OCI-LY7 (cell line): ENCODE measurements at regions of chr10 and their contacts with region 1.

Region 1: GRCh38 chr10:16777473-16778370 is 39.5 kb downstream of the RSU1 start:
- DNase-seq: peak; percentile 71
- H3K4me3 ChIP-seq: no peak overlapping the region
- H3K27ac ChIP-seq: no peak overlapping the region
- H3K4me1 ChIP-seq: peaks cover 7% of the 10 kb centered on the region
- CTCF ChIP-seq: peak; percentile 94

Region 2: DNA sequence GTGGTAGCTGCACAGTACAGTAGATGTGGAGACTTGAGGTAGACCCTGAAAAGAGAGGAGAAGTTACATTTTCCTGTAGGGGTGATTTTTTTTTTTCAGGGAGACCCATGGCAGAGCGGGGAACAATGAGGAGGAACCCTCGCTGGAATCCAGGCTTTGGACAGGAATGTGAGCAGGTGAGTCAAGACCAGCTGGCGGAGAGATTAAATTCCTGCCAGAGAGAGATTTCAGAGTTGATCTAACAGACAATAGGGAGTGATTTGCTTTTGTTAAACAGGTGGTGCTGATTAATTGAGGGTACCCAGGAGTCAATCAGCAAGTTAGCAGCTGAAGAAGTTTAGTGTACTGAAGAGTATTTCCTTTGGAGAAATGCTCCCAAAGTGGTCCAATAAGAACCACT is 875.8 kb before region 1 on chr10:
- CTCF ChIA-PET with region 1: no interaction called
- POLR2A ChIA-PET with region 1: no interaction called
- intact Hi-C with region 1: loop called (anchors 5 kb)
- DNase-seq: no peak
- H3K4me3 ChIP-seq: no peak overlapping the region
- H3K27ac ChIP-seq: no peak overlapping the region
- H3K4me1 ChIP-seq: no peaks in the 10 kb centered on the region
- CTCF ChIP-seq: no peak

Region 3: GRCh38 chr10:16116404-16117304 is 661.1 kb before region 1 on chr10:
- CTCF ChIA-PET with region 1: no interaction called
- POLR2A ChIA-PET with region 1: no interaction called
- intact Hi-C with region 1: loop called (anchors 5 kb)
- DNase-seq: peak; percentile 20
- H3K4me3 ChIP-seq: no peak overlapping the region
- H3K27ac ChIP-seq: no peak overlapping the region
- H3K4me1 ChIP-seq: no peaks in the 10 kb centered on the region
- CTCF ChIP-seq: peak; percentile 75

Region 4: DNA sequence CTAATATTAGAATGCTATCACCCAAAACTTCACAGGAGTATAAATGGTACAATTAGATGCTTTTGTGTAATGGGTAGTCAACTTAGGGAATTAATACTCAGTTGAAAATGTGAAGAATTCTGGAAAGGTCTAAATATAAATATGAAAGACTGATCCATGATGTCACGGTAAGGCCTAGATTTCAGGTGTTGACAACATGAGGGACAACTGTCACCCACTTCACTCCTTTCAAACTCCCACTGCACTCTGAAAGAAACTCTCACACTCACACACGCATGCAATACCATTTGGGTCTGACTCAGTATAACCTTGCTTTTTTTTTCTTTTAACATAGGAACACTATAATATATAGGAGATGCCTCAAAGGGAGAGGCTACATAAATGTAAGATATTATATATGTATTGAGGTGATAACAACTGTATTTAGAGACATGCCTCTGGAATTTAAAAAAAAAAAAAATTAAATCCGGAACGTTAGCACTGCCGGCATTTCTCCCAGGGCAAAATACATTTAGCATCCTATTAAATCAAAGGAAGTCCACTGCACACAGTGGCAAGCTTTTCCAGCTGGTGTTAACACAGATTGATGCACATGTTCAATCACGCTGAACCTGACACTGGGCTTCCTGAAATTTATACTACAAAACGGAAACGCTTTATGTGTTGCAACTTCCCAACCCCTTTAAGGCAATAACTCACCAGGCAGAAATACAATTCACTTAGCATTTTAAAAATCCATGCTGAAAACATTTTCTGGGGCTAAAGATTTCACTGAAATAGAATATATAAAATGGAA is 35.4 kb before region 1 on chr10:
- CTCF ChIA-PET with region 1: no interaction called
- POLR2A ChIA-PET with region 1: no interaction called
- intact Hi-C with region 1: no loop called
- DNase-seq: no peak
- H3K4me3 ChIP-seq: no peak overlapping the region
- H3K27ac ChIP-seq: no peak overlapping the region
- H3K4me1 ChIP-seq: no peaks in the 10 kb centered on the region
- CTCF ChIP-seq: no peak

Region 5: GRCh38 chr10:16965740-16966447 is 188.2 kb after region 1 on chr10:
- CTCF ChIA-PET with region 1: no interaction called
- POLR2A ChIA-PET with region 1: no interaction called
- intact Hi-C with region 1: no loop called
- DNase-seq: no peak
- H3K4me3 ChIP-seq: no peak overlapping the region
- H3K27ac ChIP-seq: no peak overlapping the region
- H3K4me1 ChIP-seq: no peaks in the 10 kb centered on the region
- CTCF ChIP-seq: no peak